Activated T-helper 2 cell treated with anti-CD3 and anti-CD28 coated beads, Interferon-gamma antibody, Interleukin-2, Interleukin-4, amounts not matched to agents 10 μg/mL and 5 μg/mL and 100 μg/mL, durations not matched to agents 14 hours and 24 hours and 36 hours (primary cell): ENCODE measurements at regions of chr19 and their contacts with region 1.

Region 1: GRCh38 chr19:3984908-3985642 is at the start of gene EEF2:
- DNase-seq: peak; percentile 87
- H3K4me3 Mint-ChIP-seq: peak within 1 kb of the TSS; percentile 95
- H3K27ac Mint-ChIP-seq: peak within 1 kb of the TSS; percentile 90
- H3K4me1 Mint-ChIP-seq: peaks cover 33% of the 10 kb centered on the region
- H3K27me3 Mint-ChIP-seq: no peaks in the 10 kb centered on the region
- total RNA-seq, gene EEF2: 2,377 and 2,451 TPM in 2 replicates

Region 2: DNA sequence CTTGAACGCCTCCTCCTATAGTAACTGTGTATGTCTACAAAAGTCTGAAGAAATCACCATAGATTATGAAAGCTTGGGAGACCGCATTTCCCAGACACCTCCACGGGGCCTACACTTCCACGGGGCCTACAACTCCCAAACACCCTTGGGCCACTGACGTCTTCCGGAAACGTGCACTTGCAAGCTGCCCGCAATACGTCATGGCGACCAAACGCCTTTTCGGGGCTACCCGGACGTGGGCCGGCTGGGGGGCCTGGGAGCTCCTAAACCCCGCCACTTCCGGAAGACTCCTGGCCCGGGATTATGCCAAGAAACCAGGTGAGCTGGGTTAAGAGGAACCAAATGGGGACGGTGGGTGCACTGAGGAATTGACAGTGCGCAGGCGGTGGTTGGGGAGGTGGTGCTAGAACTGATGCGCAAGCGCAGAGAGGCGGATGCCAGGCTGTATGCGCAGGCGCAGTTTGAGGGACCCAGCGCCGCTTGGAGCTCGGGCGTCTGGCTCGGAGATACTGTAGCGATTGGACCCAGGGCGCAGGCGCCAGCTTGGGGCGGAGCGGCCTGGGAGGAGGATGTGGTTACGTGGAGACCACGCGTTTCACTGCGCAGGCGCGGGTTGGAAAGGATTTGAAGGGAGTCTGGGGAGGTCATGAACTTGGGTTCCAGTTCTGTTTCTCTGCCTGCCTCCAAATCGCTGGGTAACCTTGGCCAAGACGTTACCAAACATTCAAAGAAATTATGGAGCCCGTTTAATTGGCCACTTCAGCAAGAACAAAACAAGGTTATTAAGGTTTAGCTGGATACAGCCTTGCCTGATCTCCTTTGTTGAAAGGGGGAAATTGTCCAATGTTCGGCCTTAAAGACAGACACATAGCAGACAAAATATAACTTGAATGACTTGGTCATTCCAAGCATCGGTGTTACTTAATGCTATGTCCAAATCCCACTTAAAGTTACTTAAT is 222.3 kb before region 1 on chr19 and contains the start of gene MRPL54:
- intact Hi-C with region 1: loop called (anchors 10 kb)
- DNase-seq: peak; percentile 100
- H3K4me3 Mint-ChIP-seq: peak within 1 kb of the TSS; percentile 100
- H3K27ac Mint-ChIP-seq: peak within 1 kb of the TSS; percentile 99
- H3K4me1 Mint-ChIP-seq: peaks cover 16% of the 10 kb centered on the region
- H3K27me3 Mint-ChIP-seq: no peaks in the 10 kb centered on the region
- total RNA-seq, gene MRPL54: 98.0 and 99.6 TPM in 2 replicates

Region 3: DNA sequence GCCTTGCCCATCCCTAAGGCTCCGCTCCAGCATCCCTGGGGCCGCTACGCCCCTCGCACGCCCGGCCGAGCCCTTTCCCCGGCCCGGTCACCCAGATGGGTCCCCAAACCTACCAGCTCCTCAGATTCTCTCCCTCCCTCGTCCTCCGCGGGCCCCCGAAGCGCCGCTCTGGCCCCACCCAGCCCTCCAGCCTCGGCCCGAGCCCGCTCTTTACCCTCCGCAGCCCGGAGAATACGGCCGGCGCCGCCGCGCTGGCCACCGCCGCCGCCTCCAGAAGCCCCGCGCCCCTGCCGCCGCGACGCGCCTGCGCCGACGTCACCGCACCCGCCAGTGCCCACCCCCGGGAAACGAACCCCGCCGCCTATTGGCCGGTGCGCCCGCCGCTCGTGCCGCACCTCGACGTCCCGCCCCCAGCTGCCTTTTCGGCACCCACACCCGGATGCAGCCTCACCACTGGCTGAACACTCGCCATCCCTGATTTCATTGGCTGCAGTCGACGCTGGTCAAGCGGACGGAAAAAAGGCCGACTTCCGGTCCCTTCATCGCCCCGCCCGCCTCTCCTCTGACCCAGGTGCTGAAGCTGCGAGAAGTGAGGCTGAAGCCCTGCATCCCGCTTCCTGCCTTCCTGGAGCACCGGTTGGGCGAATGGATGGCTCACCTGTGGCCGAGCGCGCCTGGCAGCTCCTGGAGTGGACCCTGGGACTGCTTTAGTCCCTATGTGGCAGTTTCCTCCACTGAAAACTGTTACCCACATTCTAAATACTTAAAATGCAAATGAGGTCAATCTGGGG is 14.1 kb before region 1 on chr19 and contains the start of gene DAPK3:
- intact Hi-C with region 1: loop called (anchors 1 kb)
- DNase-seq: peak; percentile 93
- H3K4me3 Mint-ChIP-seq: peak within 1 kb of the TSS; percentile 91
- H3K27ac Mint-ChIP-seq: peak within 1 kb of the TSS; percentile 74
- H3K4me1 Mint-ChIP-seq: peaks cover 17% of the 10 kb centered on the region
- H3K27me3 Mint-ChIP-seq: no peaks in the 10 kb centered on the region
- total RNA-seq, gene DAPK3: 40.1 and 43.3 TPM in 2 replicates

Region 4: DNA sequence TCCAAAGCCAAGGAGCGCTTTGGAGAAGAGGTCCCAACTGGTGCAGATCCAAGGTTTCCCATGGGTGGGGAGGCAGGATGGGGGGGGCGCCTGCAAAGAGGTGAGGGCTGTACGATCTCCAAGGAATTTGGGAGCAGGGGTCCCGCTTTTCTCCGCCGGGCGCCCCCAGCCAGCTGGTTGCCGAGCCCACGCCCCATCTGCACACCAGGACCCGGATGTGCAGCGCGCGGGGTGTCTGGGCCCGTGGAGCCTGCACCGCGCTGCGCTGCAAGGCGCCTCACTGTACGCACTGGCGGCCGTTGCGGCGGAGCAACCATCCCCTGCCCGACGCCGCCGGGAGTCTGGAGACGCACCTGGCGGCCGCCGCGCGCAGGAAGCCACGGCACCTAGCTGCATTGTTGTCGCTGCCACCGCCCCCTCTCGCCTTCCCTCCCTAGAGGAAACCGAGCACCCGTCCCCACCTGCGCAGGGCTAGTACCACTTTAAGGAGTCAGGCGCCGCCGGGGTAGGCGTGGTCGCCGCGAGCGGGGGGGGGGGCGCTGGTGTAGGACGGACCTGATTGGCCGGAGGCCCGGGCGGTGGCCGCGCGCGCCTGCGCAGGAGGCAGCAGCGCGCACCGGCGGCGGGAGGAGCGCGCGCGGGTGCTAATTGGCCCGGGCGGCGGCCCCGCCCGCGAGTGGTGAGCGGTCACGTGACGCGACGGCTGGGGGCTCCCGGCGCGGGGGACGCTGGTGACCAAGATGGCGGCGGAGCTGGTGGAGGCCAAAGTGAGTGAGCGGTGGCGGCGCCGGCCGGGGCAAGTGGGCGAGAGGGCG is 22.2 kb after region 1 on chr19 and contains the start of gene PIAS4:
- intact Hi-C with region 1: loop called (anchors 1 kb)
- DNase-seq: peak; percentile 94
- H3K4me3 Mint-ChIP-seq: peak within 1 kb of the TSS; percentile 86
- H3K27ac Mint-ChIP-seq: peak within 1 kb of the TSS; percentile 73
- H3K4me1 Mint-ChIP-seq: peaks cover 8% of the 10 kb centered on the region
- H3K27me3 Mint-ChIP-seq: no peaks in the 10 kb centered on the region
- total RNA-seq, gene PIAS4: 31.5 and 36.3 TPM in 2 replicates

Region 5: GRCh38 chr19:4065430-4066175 is 80.5 kb after region 1 on chr19:
- intact Hi-C with region 1: loop called (anchors 1 kb)
- DNase-seq: peak; percentile 96
- H3K4me3 Mint-ChIP-seq: peak overlapping the region; percentile 52
- H3K27ac Mint-ChIP-seq: no peak overlapping the region
- H3K4me1 Mint-ChIP-seq: peaks cover 19% of the 10 kb centered on the region
- H3K27me3 Mint-ChIP-seq: no peaks in the 10 kb centered on the region

Region 6: DNA sequence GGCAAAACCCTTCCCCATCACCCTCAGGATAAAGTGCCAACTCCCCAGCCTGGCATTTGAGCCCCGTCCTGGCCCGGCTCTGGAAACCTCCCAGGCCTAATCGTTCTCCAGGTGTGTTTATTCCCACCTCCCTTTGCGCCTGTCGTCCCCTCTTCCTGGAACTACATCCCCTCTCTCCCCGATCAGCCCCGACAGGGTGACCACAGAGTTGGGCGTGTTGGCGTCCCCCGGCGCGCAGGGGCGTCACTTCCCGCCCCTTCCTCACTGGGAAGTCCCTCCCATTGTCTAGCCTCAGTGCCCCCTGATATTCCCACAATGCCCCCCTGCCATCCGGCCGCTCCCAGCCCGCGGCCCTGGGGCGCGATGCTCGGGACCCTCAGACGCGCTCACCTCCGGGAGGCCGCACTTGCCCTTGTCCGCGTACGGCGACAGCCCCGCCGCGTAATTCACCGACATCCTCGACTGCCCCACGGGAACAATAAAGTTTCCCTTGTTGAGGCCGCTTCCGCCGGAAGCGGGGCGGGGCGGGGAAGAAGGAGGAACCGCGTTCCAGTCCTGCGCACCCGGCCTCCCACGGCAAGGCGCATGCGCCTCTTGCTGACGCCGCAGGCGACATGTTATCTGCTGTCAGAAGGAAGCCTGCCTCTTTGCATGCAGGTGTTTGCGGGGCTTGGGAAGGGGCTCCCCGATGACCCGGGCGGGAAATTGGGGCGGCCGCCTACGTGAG is 197.2 kb after region 1 on chr19 and contains the starts of genes ANKRD24 and SIRT6:
- intact Hi-C with region 1: loop called (anchors 5 kb)
- DNase-seq: peak; percentile 96
- H3K4me3 Mint-ChIP-seq: peak within 1 kb of the TSS; percentile 99
- H3K27ac Mint-ChIP-seq: peak within 1 kb of the TSS; percentile 92
- H3K4me1 Mint-ChIP-seq: peaks cover 14% of the 10 kb centered on the region
- H3K27me3 Mint-ChIP-seq: no peaks in the 10 kb centered on the region
- total RNA-seq, gene ANKRD24: 0.30 and 0.50 TPM in 2 replicates
- total RNA-seq, gene SIRT6: 34.6 and 42.4 TPM in 2 replicates

Region 7: GRCh38 chr19:4208385-4209094 is 223.5 kb after region 1 on chr19:
- intact Hi-C with region 1: loop called (anchors 1 kb)
- DNase-seq: no peak
- H3K4me3 Mint-ChIP-seq: no peak overlapping the region
- H3K27ac Mint-ChIP-seq: no peak overlapping the region
- H3K4me1 Mint-ChIP-seq: peaks cover 2% of the 10 kb centered on the region
- H3K27me3 Mint-ChIP-seq: peaks cover 1% of the 10 kb centered on the region